Right ventricle myocardium inferior (tissue), 1 donor: ENCODE measurements at regions of chr9 and their contacts with region 1.

Region 1: GRCh38 chr9:37800631-37801286 is at the start of gene DCAF10:
- DNase-seq: peak; percentile 94
- ATAC-seq: peak; percentile 97
- total RNA-seq, gene DCAF10: 22.3 TPM

Region 2: GRCh38 chr9:37740636-37741328 is 60.0 kb before region 1 on chr9:
- intact Hi-C with region 1: no loop called
- DNase-seq: no peak
- ATAC-seq: no peak

Region 3: DNA sequence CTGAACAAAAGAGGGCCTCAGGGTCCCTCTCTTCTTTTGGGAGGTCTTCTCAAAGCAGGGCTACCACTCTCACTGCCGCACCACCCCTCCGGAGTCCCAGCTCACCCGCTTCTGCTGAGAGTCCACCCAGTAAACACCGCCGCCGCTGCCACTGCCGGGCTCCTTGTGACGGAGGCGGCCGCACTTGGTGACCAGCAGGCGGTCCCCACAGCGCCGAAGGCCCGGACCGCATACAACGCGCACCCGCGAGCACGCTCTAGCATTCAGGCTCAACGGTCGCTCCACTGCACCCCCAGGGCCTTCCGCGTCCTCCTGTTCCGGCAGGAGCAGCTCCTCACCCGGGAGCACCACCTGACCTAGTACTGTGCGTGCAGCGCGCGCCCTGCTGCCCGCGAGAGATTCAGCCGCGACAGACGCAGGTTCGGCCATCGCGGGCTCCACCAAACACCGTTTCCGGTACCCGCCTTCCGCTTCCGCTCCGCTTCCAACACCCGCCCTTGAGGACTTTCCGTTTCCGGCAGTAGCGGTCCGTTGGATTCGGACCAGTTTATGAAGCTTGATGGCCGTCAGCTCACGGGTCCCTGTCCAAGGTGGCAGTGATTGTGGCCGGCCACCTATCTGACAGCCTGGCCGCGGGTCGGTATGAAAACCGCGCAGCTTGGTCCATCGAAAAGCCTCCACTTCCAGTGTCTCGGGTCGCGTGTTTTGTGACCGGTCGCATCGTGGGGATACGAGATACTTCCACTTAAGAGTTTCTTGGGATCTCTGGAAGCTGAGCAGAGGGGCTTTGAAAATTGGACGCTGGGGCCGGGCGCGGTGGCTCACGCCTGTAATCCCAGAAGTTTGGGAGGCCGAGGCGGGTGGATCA is 15.9 kb before region 1 on chr9 and contains the start of gene EXOSC3:
- intact Hi-C with region 1: loop called (anchors 2 kb)
- DNase-seq: peak; percentile 95
- ATAC-seq: peak; percentile 96
- total RNA-seq, gene EXOSC3: 17.0 TPM

Region 4: GRCh38 chr9:37903647-37904444 is 103.1 kb after region 1 on chr9 and contains the start of gene SLC25A51:
- intact Hi-C with region 1: loop called (anchors 10 kb)
- DNase-seq: peak; percentile 96
- ATAC-seq: peak; percentile 94
- total RNA-seq, gene SLC25A51: 22.0 TPM

Region 5: GRCh38 chr9:38088006-38088925 is 287.5 kb after region 1 on chr9:
- intact Hi-C with region 1: loop called (anchors 10 kb)
- DNase-seq: peak; percentile 86
- ATAC-seq: peak; percentile 77